ENCODE measurements at regions of chr14 and their contacts with region 1.

Region 1: DNA sequence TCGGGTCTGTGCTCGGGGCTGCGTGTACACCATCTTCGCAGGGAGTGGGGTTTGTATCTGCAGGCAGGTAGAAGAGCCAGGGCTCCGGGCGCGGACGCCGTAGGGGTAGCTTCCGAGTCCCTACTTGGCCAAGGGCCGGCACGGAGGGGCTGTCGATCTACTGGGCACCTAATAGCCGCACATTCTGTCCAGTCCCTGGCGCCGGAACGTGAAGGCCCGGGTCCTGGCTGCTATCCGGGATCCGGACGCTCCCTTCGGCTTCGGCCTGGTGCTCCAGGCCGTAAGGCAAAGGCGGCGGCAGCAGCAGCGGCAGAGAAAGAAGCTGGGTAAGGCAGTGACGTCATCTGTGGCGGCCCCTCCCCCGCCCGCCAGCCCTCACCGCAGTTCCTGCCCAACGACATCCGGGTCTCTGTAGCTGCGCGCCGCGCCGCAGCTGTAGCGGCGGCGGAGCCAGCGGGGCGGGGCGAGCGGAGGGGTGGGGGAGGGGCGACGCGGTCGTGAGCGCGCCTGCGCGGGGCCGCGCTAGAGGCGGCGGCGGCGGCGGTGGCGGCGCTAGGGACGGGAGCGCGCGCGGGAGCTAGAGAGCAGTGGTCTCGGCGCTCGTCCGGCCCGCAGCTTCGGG is at the start of gene PPM1A:
- DNase-seq: peak; percentile 94 to 98
- ATAC-seq: peak; percentile 69 to 91 (median 76)
- H3K4me3 ChIP-seq: peak within 1 kb of the TSS; percentile 86
- H3K4me3 Mint-ChIP-seq: peak within 1 kb of the TSS; percentile 99
- H3K27ac ChIP-seq: peak within 1 kb of the TSS; percentile 98
- H3K27ac Mint-ChIP-seq: peak within 1 kb of the TSS; percentile 100
- H3K4me1 ChIP-seq: peaks cover 19% of the 10 kb centered on the region
- H3K4me1 Mint-ChIP-seq: peaks cover 52 to 53% of the 10 kb centered on the region in 2 donors
- H3K27me3 ChIP-seq: no peaks in the 10 kb centered on the region
- H3K27me3 Mint-ChIP-seq: peaks cover 0 to 2% of the 10 kb centered on the region in 2 donors
- CTCF ChIP-seq: no peak
- total RNA-seq, gene PPM1A: 118 to 126 (median 119) TPM

Region 2: DNA sequence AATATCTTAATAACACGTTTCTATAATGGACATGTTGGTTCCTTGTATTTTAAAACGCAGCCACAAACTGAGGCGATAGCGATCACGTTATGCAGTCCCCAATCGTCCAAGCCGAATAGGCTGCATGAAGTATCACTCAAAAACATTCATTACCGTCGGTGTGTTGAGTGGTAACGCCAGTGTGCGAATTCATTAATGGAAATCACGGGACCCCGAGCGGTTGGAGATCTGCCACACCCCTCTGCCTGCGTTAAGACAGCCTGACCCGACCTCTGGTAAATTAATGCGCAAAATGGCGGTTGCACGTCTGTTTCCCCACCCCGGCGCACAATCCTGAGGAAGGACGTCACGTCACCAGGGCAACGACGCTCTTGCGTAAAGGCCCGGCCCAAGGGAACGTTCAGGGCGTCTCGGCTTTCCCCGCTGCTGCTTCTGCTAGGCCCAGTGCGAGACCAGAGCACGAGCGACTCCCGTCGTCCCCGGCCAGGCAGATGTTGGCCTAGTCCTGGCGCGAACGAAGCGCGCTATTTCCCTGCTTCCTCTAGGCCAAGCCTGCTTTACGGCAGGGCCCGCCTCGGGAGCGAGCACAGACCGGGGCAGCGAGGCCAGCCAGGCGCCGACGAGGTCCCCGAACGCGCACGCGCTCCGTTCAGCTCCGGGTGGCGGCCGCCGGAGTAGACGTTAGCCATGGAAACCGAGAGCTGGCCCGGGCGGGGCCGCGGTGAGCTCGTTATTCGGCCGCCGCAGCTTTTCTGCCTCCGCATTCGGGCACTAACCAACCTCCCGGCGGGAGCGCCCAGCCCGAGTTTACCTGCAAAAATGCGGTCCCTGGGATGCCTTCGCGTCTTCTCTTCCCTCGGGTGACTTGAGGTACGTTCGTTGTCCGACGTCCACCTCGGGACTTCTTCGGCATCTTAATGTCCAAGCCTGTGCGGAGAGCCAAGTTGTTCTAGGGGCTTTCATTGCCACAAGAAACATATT is 157.0 kb before region 1 on chr14 and contains the start of gene PCNX4:
- intact Hi-C with region 1: loop called (anchors 2 kb)
- DNase-seq: peak; percentile 88 to 99
- ATAC-seq: peak; percentile 82 to 95 (median 89)
- H3K4me3 ChIP-seq: peak within 1 kb of the TSS; percentile 84
- H3K4me3 Mint-ChIP-seq: peak within 1 kb of the TSS; percentile 92
- H3K27ac ChIP-seq: peak within 1 kb of the TSS; percentile 97
- H3K27ac Mint-ChIP-seq: peak within 1 kb of the TSS; percentile 94 to 96
- H3K4me1 ChIP-seq: peaks cover 19% of the 10 kb centered on the region
- H3K4me1 Mint-ChIP-seq: peaks cover 45 to 49% of the 10 kb centered on the region in 2 donors
- H3K27me3 ChIP-seq: no peaks in the 10 kb centered on the region
- H3K27me3 Mint-ChIP-seq: peaks cover 0 to 9% of the 10 kb centered on the region in 2 donors
- CTCF ChIP-seq: no peak
- total RNA-seq, gene PCNX4: 51.7 to 78.3 (median 58.3) TPM

Region 3: DNA sequence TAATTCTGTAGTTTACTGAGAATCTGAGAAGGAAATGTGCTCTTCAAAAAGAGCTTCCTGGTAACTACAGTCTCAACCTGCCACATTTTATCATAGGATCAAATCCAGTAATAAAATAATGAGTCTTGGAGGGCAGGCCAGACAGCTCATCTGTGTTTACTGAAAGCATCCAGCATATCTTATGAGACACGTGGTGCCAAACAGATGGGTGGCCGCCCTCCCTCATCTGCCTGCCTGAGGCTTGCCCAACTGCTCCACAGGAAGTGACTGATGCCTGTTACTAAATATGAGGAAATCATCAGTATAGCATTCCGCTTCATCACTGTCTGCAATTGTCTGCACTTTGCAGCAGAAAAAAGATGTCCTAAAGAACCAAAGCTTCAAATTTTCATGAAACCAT is 97.1 kb before region 1 on chr14:
- intact Hi-C with region 1: loop called (anchors 2 kb)
- DNase-seq: peak; percentile 68 to 83
- ATAC-seq: peak; percentile 92 to 98 (median 97)
- H3K4me3 ChIP-seq: no peak overlapping the region
- H3K4me3 Mint-ChIP-seq: peak overlapping the region; percentile 71
- H3K27ac ChIP-seq: peak overlapping the region; percentile 77
- H3K27ac Mint-ChIP-seq: peak overlapping the region; percentile 96 to 97
- H3K4me1 ChIP-seq: peaks cover 28% of the 10 kb centered on the region
- H3K4me1 Mint-ChIP-seq: peaks cover 52% of the 10 kb centered on the region in 2 donors
- H3K27me3 ChIP-seq: no peaks in the 10 kb centered on the region
- H3K27me3 Mint-ChIP-seq: no peaks in the 10 kb centered on the region
- CTCF ChIP-seq: no peak

Region 4: DNA sequence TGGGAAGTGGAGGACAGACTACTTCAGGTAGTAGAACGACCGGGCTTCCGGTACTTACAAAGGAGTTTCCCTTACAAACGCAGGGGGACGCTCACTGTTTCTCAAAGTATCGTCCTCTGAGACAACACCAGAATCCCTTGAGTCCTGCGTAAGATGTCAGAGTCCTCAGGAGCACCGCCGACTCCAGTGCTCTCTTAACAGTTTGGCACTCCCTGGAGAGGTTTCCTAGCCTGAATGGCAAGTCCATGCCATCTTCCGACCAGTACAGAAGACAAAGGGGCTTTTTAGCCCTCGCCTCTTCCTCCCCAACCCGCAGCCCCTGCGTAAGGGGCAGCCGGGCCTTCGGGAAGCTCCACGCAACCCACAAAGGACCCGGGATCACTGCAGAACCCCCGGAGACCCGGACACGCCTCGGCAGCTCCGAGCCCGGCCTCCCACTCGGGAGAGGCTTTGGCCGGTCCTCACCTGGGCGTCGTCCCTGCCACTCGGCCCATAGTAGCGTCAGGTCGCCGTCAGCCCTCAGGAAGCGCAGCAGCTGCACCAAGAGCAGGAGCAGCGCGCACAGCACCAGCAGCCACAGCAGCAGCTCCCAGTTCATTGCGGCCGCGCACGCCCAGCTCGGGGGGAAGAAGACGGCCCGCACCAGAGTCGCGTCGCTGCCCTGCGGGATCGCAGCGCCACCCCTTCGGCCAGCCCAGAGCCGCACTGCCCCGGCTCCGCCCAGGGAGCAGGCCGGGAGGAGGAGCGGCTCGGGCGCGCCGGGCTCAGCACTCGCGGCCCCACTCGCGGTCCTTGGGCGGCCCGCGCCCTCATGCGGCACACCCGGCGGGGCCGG is 83.9 kb before region 1 on chr14 and contains the start of gene DHRS7:
- intact Hi-C with region 1: loop called (anchors 1 kb)
- DNase-seq: peak; percentile 72 to 85
- ATAC-seq: peak; percentile 80 to 95 (median 89)
- H3K4me3 ChIP-seq: peak within 1 kb of the TSS; percentile 98
- H3K4me3 Mint-ChIP-seq: peak within 1 kb of the TSS; percentile 96
- H3K27ac ChIP-seq: peak within 1 kb of the TSS; percentile 98
- H3K27ac Mint-ChIP-seq: peak within 1 kb of the TSS; percentile 98
- H3K4me1 ChIP-seq: peaks cover 37% of the 10 kb centered on the region
- H3K4me1 Mint-ChIP-seq: peaks cover 51 to 53% of the 10 kb centered on the region in 2 donors
- H3K27me3 ChIP-seq: no peaks in the 10 kb centered on the region
- H3K27me3 Mint-ChIP-seq: no peaks in the 10 kb centered on the region
- CTCF ChIP-seq: peak; percentile 11
- total RNA-seq, gene DHRS7: 115 to 139 (median 126) TPM

Region 5: GRCh38 chr14:60204104-60204842 is 44.5 kb before region 1 on chr14:
- intact Hi-C with region 1: no loop called
- DNase-seq: no peak
- ATAC-seq: no peak
- H3K4me3 ChIP-seq: no peak overlapping the region
- H3K4me3 Mint-ChIP-seq: no peak overlapping the region
- H3K27ac ChIP-seq: no peak overlapping the region
- H3K27ac Mint-ChIP-seq: no peak overlapping the region
- H3K4me1 ChIP-seq: no peaks in the 10 kb centered on the region
- H3K4me1 Mint-ChIP-seq: no peaks in the 10 kb centered on the region
- H3K27me3 ChIP-seq: no peaks in the 10 kb centered on the region
- H3K27me3 Mint-ChIP-seq: peaks cover 34 to 55% of the 10 kb centered on the region in 2 donors
- CTCF ChIP-seq: no peak

Region 6: GRCh38 chr14:60331201-60332045 is 82.6 kb after region 1 on chr14:
- intact Hi-C with region 1: loop called (anchors 5 kb)
- DNase-seq: peak; percentile 62 to 88
- ATAC-seq: peak; percentile 80 to 91 (median 86)
- H3K4me3 ChIP-seq: peak overlapping the region; percentile 53
- H3K4me3 Mint-ChIP-seq: peak overlapping the region; percentile 95
- H3K27ac ChIP-seq: peak overlapping the region; percentile 34
- H3K27ac Mint-ChIP-seq: peak overlapping the region; percentile 75 to 88
- H3K4me1 ChIP-seq: peaks cover 17% of the 10 kb centered on the region
- H3K4me1 Mint-ChIP-seq: peaks cover 17 to 22% of the 10 kb centered on the region in 2 donors
- H3K27me3 ChIP-seq: peaks cover 6% of the 10 kb centered on the region
- H3K27me3 Mint-ChIP-seq: peaks cover 37 to 46% of the 10 kb centered on the region in 2 donors
- CTCF ChIP-seq: peak; percentile 88

Region 7: GRCh38 chr14:61761959-61762786 is 1513.4 kb after region 1 on chr14 and contains the start of gene SNAPC1:
- intact Hi-C with region 1: loop called (anchors 5 kb)
- DNase-seq: peak; percentile 95 to 100
- ATAC-seq: peak; percentile 93 to 99 (median 96)
- H3K4me3 ChIP-seq: peak within 1 kb of the TSS; percentile 95
- H3K4me3 Mint-ChIP-seq: peak within 1 kb of the TSS; percentile 97
- H3K27ac ChIP-seq: peak within 1 kb of the TSS; percentile 96
- H3K27ac Mint-ChIP-seq: peak within 1 kb of the TSS; percentile 96 to 97
- H3K4me1 ChIP-seq: peaks cover 18% of the 10 kb centered on the region
- H3K4me1 Mint-ChIP-seq: peaks cover 25 to 37% of the 10 kb centered on the region in 2 donors
- H3K27me3 ChIP-seq: no peaks in the 10 kb centered on the region
- H3K27me3 Mint-ChIP-seq: peaks cover 9 to 10% of the 10 kb centered on the region in 2 donors
- CTCF ChIP-seq: no peak
- total RNA-seq, gene SNAPC1: 2.2 to 2.4 (median 2.2) TPM